ENCODE measurements at regions of chr2 and their contacts with region 1.

Region 1: DNA sequence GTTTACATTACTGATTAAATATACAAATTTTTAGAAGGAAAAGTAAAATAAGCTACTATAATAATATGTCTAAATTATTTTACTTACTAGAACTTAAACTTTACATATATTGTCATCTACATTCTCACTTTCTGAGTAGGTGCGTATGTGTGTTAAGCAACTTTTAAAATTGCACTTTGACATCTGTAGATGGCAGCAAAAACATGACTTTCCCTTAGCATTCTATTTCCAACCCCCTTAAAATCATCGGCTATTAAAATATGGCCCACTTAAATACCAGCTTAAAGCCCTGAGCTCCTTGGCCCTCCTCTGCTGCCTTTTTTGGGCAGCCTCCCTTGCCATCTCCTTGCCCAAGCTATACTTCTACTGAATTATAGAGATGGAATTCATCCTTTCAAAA is 78.0 kb downstream of the UPP2 start:
- DNase-seq: peak; percentile 45
- ATAC-seq: peak; percentile 64
- H3K4me3 ChIP-seq: no peak overlapping the region
- H3K27ac ChIP-seq: no peak overlapping the region
- H3K4me1 ChIP-seq: peaks cover 23% of the 10 kb centered on the region
- H3K27me3 ChIP-seq: peaks cover 4% of the 10 kb centered on the region
- CTCF ChIP-seq: peak; percentile 64

Region 2: DNA sequence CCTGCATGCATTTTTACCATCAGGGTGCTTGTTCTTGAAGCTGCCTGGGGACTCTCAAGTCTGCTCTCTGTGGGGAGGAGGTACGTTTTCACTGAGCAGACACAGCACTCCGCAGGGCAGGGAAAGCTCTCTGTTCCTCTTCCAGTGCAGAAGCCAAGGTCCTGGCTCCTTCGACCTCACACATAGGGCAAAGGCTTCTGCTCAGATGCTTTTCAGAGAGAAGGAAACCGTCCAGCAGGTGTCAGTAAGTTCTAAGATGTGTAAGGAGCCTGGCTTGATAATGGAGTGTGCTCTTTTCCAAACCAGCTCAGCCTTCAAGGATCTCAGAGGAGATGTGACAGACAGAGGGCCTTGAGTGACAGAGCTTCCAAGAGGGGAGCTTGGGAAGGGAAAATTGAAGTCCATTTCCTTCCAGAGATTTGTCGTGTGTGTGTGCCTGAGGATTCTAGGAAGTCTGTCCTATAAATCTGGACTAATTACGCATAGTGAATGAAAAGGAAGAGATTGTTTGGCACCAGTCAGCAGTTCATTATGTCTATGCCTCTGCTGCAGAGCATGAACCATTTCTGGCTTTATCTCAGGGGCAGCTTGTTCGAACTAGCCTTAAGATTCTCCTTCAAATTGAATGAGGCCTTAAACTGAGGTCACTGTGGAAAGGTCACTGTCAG is 145.3 kb before region 1 on chr2:
- CTCF ChIA-PET with region 1: no interaction called
- POLR2A ChIA-PET with region 1: no interaction called
- intact Hi-C with region 1: loop called (anchors 10 kb)
- DNase-seq: peak; percentile 76
- ATAC-seq: peak; percentile 91
- H3K4me3 ChIP-seq: no peak overlapping the region
- H3K27ac ChIP-seq: no peak overlapping the region
- H3K4me1 ChIP-seq: no peaks in the 10 kb centered on the region
- H3K27me3 ChIP-seq: peaks cover 12% of the 10 kb centered on the region
- CTCF ChIP-seq: peak; percentile 71

Region 3: DNA sequence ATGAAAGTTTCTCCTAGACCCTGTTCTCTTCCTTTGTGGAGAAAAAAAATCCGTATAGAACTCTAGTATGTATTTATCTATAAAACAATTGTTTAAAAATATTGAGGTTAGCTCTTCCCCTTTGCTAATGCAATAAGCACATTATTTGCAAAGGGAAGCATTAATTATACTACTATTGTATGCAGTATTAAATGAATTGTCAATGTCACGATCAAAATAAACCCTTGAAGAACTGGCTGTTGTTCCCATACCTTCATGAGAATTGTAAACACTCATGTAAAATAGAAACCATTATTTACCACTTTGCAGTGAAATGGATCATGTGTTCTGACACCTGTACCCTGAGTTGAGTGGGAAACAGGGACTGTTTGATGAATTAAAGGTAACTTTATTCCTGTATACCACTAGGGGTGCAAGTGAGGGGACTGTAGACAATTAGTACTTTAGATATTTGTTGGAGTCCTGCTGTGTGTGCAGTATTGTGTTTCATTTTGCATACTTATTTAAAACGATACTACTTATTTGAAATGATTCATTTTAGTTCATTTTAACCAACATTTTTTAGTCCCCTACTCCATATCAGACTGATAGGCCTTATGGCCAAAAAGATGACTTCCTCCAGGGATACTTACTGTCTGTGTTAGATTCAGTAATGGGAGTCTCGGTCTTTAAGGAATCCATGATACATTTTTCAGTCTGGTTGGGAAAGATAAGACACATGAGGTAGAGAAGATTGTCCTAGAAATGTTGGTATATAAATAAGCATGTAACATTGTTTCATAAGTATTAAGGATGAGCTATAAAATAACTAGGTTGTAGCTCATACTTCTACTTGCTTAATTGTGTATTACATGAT is 285.0 kb after region 1 on chr2:
- CTCF ChIA-PET with region 1: no interaction called
- POLR2A ChIA-PET with region 1: no interaction called
- intact Hi-C with region 1: loop called (anchors 5 kb)
- DNase-seq: peak; percentile 39
- ATAC-seq: peak; percentile 49; the same call in 1 of the 2 replicates
- H3K4me3 ChIP-seq: no peak overlapping the region
- H3K27ac ChIP-seq: no peak overlapping the region
- H3K4me1 ChIP-seq: peaks cover 17% of the 10 kb centered on the region
- H3K27me3 ChIP-seq: no peaks in the 10 kb centered on the region
- CTCF ChIP-seq: peak; percentile 78

Region 4: DNA sequence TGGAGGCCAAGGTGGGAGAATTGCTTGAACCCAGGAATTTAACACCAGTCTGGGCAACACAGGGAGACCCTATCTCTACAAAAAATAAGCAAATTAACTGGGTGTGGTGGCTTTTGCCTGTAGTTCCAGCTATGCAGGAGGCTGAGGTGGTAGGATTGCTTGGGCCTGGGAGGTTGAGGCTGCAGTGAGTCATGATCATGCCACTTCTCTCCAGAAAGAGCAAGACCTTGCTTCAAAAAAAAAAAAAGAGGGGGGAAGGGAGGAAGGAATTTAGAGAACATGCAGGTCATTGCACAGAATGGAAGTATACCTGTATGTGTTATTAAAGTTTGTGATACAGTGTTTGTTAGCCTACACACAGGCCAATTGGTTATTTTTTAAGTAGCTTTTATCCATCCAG is 302.9 kb after region 1 on chr2:
- CTCF ChIA-PET with region 1: interaction called, 11 read pairs
- POLR2A ChIA-PET with region 1: no interaction called
- intact Hi-C with region 1: no loop called
- DNase-seq: peak; percentile 31
- ATAC-seq: no peak
- H3K4me3 ChIP-seq: no peak overlapping the region
- H3K27ac ChIP-seq: no peak overlapping the region
- H3K4me1 ChIP-seq: peaks cover 17% of the 10 kb centered on the region
- H3K27me3 ChIP-seq: no peaks in the 10 kb centered on the region
- CTCF ChIP-seq: no peak

Region 5: DNA sequence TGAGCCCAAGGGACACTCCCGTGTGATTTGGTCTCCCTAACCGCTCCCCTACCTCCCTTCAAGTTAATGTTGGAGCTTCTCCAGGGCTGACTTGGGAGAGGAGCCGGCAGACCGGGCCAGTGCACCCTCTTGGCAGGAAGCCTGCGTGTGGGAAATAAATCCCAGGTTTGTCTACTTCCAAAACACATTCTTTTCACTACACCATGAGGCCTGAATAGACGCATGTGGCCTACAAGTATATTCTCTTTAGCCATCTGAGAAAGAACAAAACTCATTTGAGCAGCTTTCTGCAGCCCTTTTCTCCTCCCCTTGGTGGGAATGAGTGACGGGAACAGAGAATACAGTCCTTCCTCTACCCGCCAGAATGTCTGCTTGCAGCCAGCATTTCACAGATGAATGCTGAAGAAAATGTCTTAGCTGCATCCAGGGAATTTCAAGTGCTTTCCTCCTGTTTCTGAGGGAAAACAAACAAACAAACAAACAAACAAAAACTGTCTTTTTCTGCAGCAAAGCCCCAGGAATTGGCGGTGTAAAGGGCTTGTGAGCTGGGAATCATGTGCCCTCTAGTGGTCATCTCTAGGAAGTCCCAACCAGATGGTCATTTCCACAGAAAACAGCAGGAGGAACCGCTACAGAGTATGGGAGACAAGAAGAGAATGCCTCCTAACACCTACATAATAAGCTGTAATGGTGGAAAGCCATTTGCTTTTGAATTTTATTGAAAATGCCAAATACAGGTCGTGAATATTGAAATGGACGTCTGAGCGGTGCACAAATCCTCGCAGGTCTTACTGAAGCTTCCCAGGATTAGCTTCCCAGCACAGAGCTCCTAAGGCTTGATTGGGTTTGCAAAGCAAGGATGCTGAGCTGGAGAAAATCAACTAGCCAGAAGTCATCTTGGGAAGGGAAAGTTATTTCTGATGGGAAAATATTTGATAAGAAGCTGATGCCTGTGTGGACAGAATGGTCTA is 574.3 kb after region 1 on chr2:
- CTCF ChIA-PET with region 1: no interaction called
- POLR2A ChIA-PET with region 1: no interaction called
- intact Hi-C with region 1: loop called (anchors 2 kb)
- DNase-seq: peak; percentile 73
- ATAC-seq: peak; percentile 88
- H3K4me3 ChIP-seq: peak overlapping the region; percentile 32; the same call in 1 of the 2 replicates
- H3K27ac ChIP-seq: no peak overlapping the region
- H3K4me1 ChIP-seq: no peaks in the 10 kb centered on the region
- H3K27me3 ChIP-seq: no peaks in the 10 kb centered on the region
- CTCF ChIP-seq: peak; percentile 97